Ascending aorta (tissue), 2 donors: ENCODE measurements at regions of chr12 and their contacts with region 1.

Region 1: DNA sequence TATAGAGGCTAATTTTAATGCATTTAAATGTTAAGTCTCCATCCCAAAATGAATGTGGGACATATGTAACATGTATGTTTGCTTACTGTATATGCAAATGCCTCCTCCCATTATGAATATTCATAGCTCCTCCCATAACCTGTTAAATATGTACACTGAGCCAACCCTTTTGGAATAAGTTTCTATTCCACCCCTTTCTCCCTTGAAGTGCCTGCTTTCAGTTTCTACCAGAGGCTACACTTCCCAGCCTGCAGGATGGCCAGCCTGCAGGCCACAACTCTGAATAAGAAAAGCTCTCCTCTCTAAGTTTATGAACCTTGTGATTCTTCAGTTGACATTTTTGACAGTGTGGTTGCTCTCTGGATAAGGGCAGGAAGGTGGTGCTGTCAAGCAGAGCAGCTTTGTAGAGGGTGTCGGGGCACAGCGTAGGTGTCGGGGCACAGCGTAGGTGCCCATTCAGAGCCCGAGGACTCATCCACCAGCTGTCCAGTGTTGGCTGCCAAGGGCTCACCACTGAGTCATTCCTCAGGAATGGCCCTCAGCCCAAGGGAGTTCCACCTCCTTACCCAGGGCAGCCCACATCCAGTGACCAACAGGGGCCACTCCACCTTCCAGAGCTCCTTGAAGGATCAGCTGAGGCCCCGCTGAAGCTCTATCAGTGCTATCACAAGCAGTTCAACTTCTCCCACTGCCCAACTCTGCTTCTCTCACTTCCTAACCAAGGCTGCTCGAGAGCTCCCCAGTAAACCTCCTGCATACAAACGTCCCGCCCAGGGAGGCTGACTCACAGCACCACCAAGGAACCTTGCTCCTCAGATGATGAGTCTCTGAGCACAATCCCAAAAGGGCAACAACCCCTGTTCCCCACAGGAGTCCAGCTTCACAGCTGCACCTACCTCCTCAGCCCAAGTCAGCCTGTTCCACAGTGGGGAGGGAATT is 31.4 kb downstream of the VWF start:
- DNase-seq: peak; percentile 53 to 91
- H3K4me3 ChIP-seq: no peak overlapping the region
- H3K27ac ChIP-seq: peak overlapping the region; percentile 68 to 75
- H3K4me1 ChIP-seq: peaks cover 6 to 15% of the 10 kb centered on the region in 2 donors
- H3K27me3 ChIP-seq: no peaks in the 10 kb centered on the region
- CTCF ChIP-seq: peak in 1 of 3 experiments; percentile 9

Region 2: GRCh38 chr12:6145564-6145963 is 52.5 kb after region 1 on chr12:
- intact Hi-C with region 1: loop called (anchors 5 kb)
- DNase-seq: peak in 1 of 2 donors; percentile 11
- H3K4me3 ChIP-seq: no peak overlapping the region
- H3K27ac ChIP-seq: no peak overlapping the region
- H3K4me1 ChIP-seq: no peaks in the 10 kb centered on the region
- H3K27me3 ChIP-seq: no peaks in the 10 kb centered on the region
- CTCF ChIP-seq: no peak

Region 3: DNA sequence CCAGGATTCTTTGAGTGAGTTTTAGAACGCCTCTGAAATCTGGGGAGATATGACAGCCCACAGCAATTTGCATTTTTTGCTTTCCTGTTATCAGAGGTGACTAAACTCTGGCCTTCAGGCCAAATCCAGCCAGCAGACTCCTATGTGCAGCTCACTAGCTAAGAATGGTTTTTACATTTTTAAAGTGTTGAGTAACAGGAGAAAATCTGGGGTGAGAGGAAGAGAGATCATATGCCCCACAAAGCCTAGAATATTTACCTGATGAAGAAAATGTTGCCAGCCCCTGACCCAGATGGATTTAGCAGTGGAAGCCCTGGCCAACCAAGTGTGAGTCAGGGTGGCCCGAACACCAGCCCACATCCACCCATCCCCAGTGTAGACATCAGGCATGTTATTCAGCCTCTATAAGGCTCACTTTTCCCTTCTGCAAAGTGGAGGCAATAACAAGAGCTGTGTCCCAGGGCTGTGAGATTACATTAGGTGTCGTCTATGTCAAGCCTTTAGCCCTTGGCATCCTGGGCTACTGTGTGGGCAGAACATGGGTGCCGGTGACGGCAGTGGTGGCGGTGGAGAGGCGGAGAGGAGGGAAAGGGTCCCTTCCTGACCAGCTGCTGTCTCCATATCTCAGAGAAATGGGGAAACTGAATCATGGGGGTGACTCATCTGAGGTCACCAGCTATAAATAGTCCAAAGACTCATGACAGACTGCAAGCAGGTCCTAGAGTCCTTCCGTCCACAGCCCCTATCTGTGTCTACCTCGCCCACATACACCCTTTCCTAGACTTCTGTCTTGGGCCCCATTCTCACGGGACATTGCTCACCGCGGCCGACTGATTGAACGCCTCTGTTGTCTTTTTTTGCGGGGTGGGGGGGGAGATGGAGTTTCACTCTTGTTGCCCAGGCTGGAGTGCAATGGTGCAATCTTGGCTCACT is 74.5 kb after region 1 on chr12:
- intact Hi-C with region 1: loop called (anchors 5 kb)
- DNase-seq: peak; percentile 75 to 95
- H3K4me3 ChIP-seq: no peak overlapping the region
- H3K27ac ChIP-seq: peak overlapping the region; percentile 93 to 98
- H3K4me1 ChIP-seq: peaks cover 9 to 31% of the 10 kb centered on the region in 2 donors
- H3K27me3 ChIP-seq: no peaks in the 10 kb centered on the region
- CTCF ChIP-seq: no peak

Region 4: GRCh38 chr12:6182116-6182898 is 89.3 kb after region 1 on chr12:
- intact Hi-C with region 1: loop called (anchors 5 kb)
- DNase-seq: peak in 1 of 2 donors; percentile 86
- H3K4me3 ChIP-seq: peak overlapping the region in 1 of 2 donors; percentile 33
- H3K27ac ChIP-seq: peak overlapping the region; percentile 89 to 92
- H3K4me1 ChIP-seq: peaks cover 20 to 56% of the 10 kb centered on the region in 2 donors
- H3K27me3 ChIP-seq: no peaks in the 10 kb centered on the region
- CTCF ChIP-seq: no peak

Region 5: GRCh38 chr12:6278439-6279255 is 185.6 kb after region 1 on chr12:
- intact Hi-C with region 1: loop called (anchors 1 kb)
- DNase-seq: peak; percentile 49 to 93
- H3K4me3 ChIP-seq: peak overlapping the region; percentile 59 to 63
- H3K27ac ChIP-seq: peak overlapping the region; percentile 82 to 85
- H3K4me1 ChIP-seq: peaks cover 8 to 23% of the 10 kb centered on the region in 2 donors
- H3K27me3 ChIP-seq: no peaks in the 10 kb centered on the region
- CTCF ChIP-seq: peak; percentile 53 to 100 (median 64)